ENCODE measurements at regions of chr19 and their contacts with region 1.

Region 1: DNA sequence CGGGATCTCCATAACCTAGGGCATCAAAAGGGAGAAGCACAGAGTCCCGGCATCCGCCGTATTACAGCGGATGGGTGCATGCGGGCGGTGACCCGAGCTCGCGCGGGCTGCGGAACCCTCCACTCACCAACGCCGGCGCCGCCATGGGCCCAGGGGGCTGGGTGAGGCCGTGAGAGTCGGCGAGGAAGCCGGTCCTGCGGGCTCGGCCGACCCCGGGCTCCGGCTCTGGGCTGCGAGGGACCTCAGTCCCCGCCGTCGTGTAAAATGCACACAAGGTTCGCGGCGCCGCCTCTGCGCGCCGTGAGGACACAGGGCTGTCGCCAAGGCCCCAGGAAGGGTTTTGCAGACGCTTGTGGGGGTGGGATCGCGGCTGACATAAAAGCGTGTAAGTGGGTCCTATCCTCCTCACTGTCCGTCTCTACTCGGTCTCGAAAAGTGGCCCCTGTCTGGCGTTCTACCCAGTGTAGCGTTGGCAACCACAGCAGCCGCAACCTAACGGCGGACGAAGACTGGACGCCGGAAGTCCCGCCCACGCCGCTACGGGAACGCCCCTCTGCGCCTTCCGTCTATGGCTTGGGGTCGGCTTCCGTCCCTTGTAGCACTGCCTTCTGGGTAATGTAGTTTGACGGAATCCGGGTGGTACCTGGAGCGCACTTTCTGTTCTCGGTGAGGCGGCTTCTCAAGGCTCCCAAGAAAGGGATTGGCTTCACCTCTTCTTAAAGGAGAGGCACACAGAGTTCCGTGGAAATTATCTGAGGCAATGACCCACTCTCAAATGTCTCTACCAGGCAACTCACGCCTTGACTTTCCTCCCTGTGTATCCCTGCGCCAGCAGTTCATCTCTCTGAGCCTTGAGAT is at the start of gene ZNF599:
- DNase-seq: peak; percentile 78 to 96 (median 92)

Region 2: DNA sequence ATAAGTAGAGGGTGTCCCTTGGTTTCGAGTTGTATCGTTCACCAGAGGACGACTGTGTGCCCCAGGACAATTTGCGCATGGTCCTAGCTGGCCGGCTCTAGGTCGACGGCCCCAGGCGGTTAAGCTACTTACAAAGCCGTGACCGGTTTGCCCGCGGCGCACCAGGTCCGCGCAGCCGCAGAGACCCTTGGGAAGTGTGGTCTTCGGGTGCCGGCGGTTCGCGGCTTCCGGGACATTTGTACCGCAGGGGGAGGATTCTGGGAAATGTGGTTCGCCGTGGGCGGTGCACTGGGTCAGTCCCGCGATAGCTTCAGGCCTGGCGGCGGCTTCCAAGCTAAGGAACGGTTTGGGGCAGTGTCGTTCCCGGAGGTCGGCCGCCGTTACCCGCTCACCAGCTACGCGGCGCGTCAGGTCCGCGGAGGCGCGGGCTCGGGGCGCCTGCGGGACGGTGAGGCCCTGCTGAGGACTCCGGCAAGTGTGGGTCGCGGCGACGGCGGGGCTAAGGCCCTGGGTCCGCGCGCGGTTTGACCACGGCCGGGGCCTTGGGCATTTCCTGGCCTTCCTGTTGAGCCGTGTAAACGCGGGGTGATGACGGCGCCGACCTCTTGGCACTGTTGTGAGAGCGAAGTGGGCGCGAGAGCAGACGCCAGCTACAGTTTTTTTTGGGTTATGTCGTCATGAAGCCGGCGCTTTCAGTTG is 95.4 kb before region 1 on chr19 and contains the start of gene ZNF302:
- intact Hi-C with region 1: loop called (anchors 2 kb)
- DNase-seq: peak; percentile 93 to 98 (median 96)

Region 3: DNA sequence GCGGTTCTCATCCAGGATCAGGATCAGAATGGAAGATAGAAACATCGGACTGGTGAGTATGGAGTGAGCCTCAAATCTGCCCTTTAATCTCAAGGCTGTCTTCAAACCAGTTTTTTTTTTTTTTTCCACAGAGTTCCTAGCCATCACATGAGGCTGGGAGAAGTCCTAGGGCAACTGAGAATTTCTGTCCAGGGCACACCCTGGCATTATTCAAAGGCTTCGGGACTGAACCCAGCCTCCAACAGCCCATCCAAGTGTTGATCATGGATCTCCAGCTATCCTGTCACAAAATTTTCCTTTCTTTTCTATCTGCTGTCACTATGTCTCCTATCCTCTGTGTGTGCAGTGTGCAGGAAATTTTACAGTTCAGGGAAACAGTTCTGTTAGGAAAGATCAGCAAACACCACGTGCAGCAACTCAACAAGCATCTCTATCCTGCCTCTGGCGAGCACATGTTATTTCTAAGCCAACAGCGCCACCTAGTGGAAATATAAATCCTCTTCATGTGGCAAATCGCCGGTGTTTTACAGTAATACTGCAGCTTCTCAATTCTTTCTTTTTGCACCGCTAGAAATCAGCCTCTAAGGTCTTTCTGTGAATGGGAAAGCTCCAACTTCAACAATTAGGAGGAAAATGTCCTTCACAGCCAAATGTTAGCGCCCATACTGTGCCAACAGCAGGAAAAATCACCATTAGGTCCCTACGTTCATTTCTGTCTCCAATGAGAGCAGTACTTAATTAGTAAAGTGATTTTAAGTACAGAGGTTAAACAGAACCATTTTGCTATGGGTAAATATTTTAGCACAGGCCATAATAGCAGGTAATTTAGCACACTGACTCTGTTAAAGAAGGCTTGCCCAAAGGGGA is 60.3 kb before region 1 on chr19:
- intact Hi-C with region 1: no loop called
- DNase-seq: peak in 35 of 42 donors; percentile 6 to 87 (median 53)

Region 4: DNA sequence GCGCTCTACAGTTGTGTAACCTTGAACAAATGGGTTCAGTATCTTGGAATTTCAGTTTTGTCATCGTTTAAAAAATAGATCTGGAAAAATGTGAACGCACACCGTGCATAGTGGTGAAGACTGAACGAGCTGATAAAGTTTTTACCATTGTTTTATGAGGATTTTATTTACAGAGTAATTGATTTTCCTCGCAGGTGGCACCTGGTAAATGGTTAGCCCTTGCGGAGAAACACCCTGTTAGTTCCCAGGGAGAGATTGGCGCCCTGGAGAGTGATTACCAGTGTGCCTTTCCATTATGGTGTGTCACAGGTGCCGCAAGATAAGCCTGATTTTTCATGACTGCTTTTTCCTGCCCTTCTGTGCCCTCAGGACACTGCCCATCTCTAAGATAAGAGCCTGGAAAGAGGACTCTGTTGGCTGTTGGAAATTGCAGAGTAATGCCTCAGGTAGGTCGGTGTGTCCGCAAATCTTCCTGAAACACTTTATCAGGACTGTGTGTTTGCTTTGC is 38.3 kb before region 1 on chr19:
- intact Hi-C with region 1: loop called (anchors 5 kb)
- DNase-seq: peak in 3 of 42 donors; percentile 6 to 23 (median 16)

Measured in head of caudate nucleus (tissue), 42 donors.